PC-3 (cell line): ENCODE measurements at regions of chr20 and their contacts with region 1.

Region 1: DNA sequence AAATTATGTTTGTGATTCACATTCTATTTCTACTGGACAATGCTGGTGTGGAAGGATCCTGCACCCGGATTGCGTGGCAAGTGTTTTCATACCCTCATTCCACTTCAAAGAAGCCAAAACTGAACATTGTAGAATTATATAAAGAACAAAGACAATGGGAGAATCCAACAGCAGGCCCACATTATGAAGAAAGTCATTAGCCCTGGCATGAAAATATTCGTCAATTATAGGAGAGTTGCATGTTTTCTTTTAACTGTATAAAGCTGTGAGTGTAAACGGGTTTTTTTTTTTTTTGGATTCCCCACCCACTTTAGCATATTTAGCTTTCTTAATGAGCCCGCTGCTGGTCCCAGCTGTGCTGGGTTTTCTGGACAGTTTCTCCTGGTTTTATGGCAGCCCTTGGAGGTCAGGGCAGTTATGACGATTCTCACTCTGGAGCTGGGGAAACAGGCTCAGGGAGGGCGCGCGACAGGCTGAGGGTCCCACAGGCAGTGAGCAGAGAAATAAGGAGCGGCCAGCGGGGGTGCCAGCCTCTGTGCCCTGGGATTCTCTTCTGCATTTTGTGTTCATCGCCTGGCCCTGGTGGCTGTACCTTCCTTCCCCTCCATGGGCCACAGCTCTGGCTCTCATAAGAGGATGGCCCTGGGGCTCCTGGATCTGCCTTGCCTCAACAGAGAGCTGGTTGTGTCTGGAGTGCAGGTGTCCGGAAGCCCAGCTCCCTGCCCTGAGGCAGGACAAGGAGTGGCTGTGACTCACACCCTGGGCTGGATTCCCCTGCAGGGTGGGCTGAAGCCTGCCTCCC is 24.0 kb upstream of the SULF2 start:
- DNase-seq: peak; percentile 99
- ATAC-seq: peak; percentile 92
- H3K4me3 ChIP-seq: no peak overlapping the region
- H3K27ac ChIP-seq: peak overlapping the region; percentile 97
- H3K4me1 ChIP-seq: peaks cover 42% of the 10 kb centered on the region
- H3K27me3 ChIP-seq: no peaks in the 10 kb centered on the region
- CTCF ChIP-seq: no peak

Region 2: GRCh38 chr20:47795214-47795919 is 13.9 kb before region 1 on chr20:
- CTCF ChIA-PET with region 1: no interaction called
- POLR2A ChIA-PET with region 1: interaction called, 6 read pairs
- intact Hi-C with region 1: loop called (anchors 1 kb)
- DNase-seq: peak; percentile 99
- ATAC-seq: peak; percentile 73
- H3K4me3 ChIP-seq: no peak overlapping the region
- H3K27ac ChIP-seq: peak overlapping the region; percentile 92
- H3K4me1 ChIP-seq: peaks cover 54% of the 10 kb centered on the region
- H3K27me3 ChIP-seq: no peaks in the 10 kb centered on the region
- CTCF ChIP-seq: no peak

Region 3: DNA sequence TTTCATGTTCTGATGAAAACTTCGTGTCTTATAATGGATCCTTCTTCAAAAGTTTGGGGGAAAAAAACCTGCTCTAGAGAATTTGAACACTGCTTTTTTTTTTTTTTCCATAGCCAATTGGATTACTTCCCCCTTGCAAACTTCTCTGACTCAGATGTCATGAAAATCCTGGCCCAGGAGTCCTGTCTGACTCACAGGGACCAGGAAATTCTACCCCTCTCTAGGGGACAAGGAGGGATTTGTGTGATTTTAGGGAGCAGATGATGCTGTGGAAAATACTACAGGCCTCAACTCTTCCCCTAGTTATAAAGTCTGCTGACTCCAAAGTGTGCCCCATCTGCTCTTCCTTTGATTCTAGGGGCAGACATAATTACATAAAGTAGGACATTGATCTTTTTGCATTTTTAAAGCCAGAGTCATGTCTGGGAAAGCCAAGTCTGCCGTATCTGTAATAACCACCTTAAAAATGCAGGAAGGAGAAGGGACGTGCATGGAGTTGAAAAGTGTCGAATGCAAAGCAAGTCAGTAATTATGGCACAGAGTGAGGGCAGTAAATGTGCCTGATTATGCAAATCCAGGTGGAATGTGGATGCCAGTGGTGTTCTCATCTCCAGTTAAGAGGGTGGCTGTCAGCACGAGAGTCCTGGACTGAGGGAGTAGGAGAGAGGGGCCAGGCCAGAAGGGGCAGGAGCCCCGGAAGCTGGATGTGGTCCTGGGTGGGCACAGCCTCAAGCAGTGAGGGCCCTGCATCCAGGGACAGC is 120.2 kb after region 1 on chr20:
- CTCF ChIA-PET with region 1: no interaction called
- POLR2A ChIA-PET with region 1: interaction called, 28 read pairs
- intact Hi-C with region 1: loop called (anchors 10 kb)
- DNase-seq: peak; percentile 92
- ATAC-seq: peak; percentile 64
- H3K4me3 ChIP-seq: no peak overlapping the region
- H3K27ac ChIP-seq: peak overlapping the region; percentile 93
- H3K4me1 ChIP-seq: peaks cover 64% of the 10 kb centered on the region
- H3K27me3 ChIP-seq: no peaks in the 10 kb centered on the region
- CTCF ChIP-seq: no peak